Dorsolateral prefrontal cortex (tissue), 120 donors: ENCODE measurements at regions of chr2 and their contacts with region 1.

Region 1: GRCh38 chr2:95056461-95057459 is 31.3 kb downstream of the MAL start:
- DNase-seq: peak in 8 of 10 donors; percentile 59 to 87 (median 72)
- H3K4me3 ChIP-seq: peak overlapping the region in 15 of 59 donors; percentile 8 to 68 (median 47)
- H3K27ac ChIP-seq: peak overlapping the region; percentile 76 to 100 (median 97)
- H3K27me3 ChIP-seq: peaks cover 0 to 5% (median 0%) of the 10 kb centered on the region in 45 donors
- CTCF ChIP-seq: no peak

Region 2: DNA sequence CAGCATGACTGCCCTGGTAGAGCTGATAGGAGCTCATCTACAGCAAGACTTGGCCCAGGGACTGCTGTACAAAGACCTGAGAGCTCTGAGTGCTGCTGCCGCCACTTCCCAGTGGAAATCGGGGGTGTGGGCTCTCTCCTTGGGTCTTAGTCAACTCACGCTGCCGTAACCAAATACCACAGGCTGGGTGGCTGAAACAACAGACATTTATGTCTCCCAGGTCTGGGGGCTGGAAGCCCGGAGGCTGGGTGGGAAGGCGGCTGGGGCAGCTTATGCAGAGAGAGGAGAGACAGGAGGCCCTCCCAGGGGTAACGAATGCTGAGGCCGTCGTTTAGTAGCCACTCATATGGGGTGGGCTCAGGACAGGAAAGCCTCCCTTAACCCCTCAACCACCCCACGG is 46.6 kb before region 1 on chr2:
- intact Hi-C with region 1: no loop called
- DNase-seq: peak in 1 of 10 donors; percentile 33
- H3K4me3 ChIP-seq: no peak overlapping the region
- H3K27ac ChIP-seq: peak overlapping the region in 12 of 59 donors; percentile 0 to 76 (median 54)
- H3K27me3 ChIP-seq: peaks cover 0 to 5% (median 0%) of the 10 kb centered on the region in 45 donors
- CTCF ChIP-seq: no peak

Region 3: DNA sequence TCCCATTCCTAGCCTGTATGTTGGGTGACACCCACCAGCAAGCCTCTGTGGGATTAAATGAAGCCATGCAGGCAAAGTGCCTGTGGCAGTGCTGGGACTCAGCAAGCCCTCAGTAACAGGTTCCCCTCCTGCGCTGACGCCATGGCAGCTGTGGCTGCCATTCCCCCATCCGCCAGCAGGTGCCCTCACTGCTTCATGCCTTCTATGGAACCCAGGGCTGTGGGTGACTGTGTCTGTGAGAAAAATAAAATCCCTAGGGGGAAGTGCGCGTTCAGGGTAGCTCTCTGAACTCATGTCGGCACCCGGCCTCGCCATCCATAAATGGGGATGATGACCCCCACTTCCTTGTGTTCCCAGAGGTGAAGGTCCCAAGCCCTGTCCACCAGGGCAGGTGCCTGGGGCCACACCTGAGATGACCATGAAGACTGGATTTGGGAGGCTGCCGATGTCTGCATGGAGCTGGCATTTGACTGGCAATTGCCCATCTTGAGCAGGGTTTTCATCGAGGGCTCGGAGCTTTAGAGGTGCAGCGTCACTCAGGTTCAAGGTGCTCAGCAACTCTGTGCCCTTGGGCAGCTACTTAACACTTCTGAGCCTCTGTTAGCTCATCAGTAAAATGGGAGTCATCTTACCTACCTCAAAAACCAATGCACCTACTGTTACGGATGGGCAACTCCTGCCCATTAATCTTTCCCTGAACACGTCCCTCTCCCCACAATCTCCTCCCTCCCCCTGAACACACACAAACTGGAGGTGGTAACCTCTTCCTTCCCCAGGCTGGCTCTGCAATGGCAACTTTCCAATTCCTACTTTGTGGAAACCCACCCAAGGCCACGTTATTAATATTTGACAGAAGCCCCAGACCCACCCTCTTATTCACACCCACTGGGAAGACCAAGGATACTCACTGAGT is 34.2 kb before region 1 on chr2:
- intact Hi-C with region 1: loop called (anchors 2 kb)
- DNase-seq: peak; percentile 36 to 91 (median 88)
- H3K4me3 ChIP-seq: peak overlapping the region in 4 of 59 donors; percentile 0 to 83 (median 30)
- H3K27ac ChIP-seq: peak overlapping the region; percentile 65 to 100 (median 96)
- H3K27me3 ChIP-seq: peaks cover 0 to 36% (median 6%) of the 10 kb centered on the region in 45 donors
- CTCF ChIP-seq: peak; percentile 77 to 99 (median 96)

Region 4: DNA sequence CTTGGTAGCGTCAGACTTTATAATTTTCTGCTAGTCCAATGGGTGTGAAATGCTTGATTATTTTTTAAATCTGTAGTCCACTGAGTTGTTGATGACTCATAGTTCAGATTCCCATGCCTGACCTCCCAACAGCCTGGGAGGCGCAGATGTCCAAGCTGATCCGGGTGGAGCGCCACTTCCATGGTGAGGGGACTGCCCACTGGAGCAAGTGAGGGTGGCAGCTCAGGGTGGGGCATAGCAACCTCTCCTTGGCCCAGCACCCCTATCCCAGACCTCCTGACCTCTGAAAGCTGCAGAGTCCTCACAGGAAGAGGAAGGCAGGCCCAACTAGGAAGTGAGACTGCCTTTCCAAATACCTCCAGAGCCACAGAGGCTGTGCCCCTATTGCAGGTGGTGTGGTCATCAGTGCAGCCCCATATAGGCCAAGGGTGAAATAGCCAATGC is 26.8 kb before region 1 on chr2:
- intact Hi-C with region 1: loop called (anchors 1 to 2 kb)
- DNase-seq: peak in 1 of 10 donors; percentile 70
- H3K4me3 ChIP-seq: peak overlapping the region in 16 of 59 donors; percentile 0 to 87 (median 16)
- H3K27ac ChIP-seq: peak overlapping the region in 57 of 59 donors; percentile 11 to 100 (median 83)
- H3K27me3 ChIP-seq: peaks cover 0 to 29% (median 6%) of the 10 kb centered on the region in 45 donors
- CTCF ChIP-seq: peak in 2 of 56 donors; percentile 9 to 11

Region 5: DNA sequence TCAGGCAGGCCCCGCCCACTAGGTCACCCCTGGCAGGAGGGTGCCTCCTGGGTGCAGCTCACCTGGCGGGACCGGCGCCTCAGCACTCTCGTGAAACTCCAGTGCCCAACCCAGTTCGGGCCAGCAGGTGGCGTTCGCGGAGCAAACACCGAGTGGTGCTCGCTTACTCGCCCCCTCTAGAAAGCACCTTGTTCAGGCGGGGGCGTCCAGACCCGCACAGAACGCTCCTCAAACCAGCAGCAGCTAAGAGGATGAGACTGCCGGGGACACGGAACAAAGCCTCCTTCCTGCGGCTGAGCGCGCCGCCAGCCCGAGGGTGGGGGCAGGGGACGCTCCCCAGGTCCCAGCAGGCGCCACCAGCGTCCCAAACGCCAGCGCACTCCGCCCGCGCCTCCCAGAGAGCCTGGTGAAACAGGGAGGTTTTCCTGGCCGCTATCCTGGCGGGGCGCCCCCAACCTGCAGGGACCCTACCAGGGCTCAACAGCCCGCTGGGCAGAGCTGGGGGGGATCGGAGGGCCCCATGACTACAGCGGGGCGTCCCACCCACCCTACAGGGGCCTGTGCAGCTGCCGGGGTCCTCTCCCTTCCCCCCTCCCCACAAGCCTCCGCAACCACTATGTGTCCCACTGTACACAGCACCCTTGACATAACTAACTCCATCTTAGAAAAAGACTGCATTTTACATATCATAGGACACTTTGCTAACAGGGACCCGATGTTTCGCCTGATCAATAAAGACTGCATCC is 20.2 kb after region 1 on chr2:
- intact Hi-C with region 1: loop called in 1 of 2 experiments (anchors 1 kb)
- DNase-seq: peak; percentile 71 to 90 (median 88)
- H3K4me3 ChIP-seq: peak overlapping the region; percentile 33 to 80 (median 61)
- H3K27ac ChIP-seq: peak overlapping the region in 55 of 59 donors; percentile 0 to 98 (median 88)
- H3K27me3 ChIP-seq: peaks cover 0 to 18% (median 0%) of the 10 kb centered on the region in 45 donors
- CTCF ChIP-seq: peak; percentile 76 to 97 (median 89)

Region 6: DNA sequence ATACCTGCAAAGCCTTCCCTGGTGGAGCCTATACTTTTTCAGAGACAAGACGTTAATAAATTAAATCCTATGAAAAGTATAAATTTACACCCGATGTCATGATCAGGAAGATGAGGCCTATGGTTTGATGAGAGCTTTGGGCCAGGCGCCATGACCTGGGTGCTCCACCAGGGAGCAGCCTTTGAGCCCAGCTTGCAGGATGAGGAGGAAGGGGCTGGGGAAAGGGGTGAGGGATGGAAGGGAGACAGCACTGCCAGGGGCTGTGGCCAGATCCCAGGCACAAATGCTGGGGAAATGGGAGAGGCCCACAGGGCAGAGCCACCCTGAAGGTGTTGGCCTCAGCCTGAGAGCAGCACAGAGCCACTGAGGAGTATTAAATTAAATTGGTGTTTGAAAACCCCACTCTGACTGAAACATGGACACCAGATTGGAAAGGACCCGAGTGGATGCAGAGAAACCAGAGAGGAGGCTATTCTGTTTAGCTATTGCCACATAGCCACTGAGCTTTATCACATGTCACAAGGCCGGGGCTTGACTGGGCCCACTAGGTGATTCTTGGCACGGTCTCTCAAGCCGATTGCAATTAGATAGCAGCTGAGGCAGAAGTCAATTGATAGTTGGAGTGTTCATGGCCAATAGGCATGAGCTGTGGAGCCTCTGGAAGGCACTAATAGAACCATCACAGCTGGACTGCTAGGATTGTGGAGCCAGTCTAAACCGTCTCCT is 336.1 kb after region 1 on chr2:
- intact Hi-C with region 1: no loop called
- DNase-seq: no peak
- H3K4me3 ChIP-seq: no peak overlapping the region
- H3K27ac ChIP-seq: no peak overlapping the region
- H3K27me3 ChIP-seq: no peaks in the 10 kb centered on the region
- CTCF ChIP-seq: peak in 1 of 56 donors; percentile 10